ENCODE measurements at regions of chr16 and their contacts with region 1.

Region 1: GRCh38 chr16:21283521-21284289 is 5.6 kb upstream of the CRYM start:
- DNase-seq: peak in 3 of 6 donors; percentile 30 to 70 (median 64)
- ATAC-seq: peak; percentile 38 to 93 (median 74)
- H3K4me3 ChIP-seq: peak overlapping the region in 2 of 4 donors; percentile 3 to 38
- H3K27ac ChIP-seq: no peak overlapping the region
- H3K4me1 ChIP-seq: no peaks in the 10 kb centered on the region
- H3K27me3 ChIP-seq: peaks cover 0 to 21% (median 3%) of the 10 kb centered on the region in 4 donors
- CTCF ChIP-seq: no peak

Region 2: GRCh38 chr16:21184834-21185233 is 98.9 kb before region 1 on chr16:
- intact Hi-C with region 1: loop called in 1 of 3 experiments (anchors 10 kb)
- DNase-seq: no peak
- ATAC-seq: no peak
- H3K4me3 ChIP-seq: no peak overlapping the region
- H3K27ac ChIP-seq: no peak overlapping the region
- H3K4me1 ChIP-seq: no peaks in the 10 kb centered on the region
- H3K27me3 ChIP-seq: no peaks in the 10 kb centered on the region
- CTCF ChIP-seq: no peak

Measured in pancreas (tissue), 10 donors.